Sigmoid colon (tissue), 7 donors: ENCODE measurements at regions of chr10 and their contacts with region 1.

Region 1: GRCh38 chr10:59906417-59907202 is at the start of gene CCDC6:
- DNase-seq: peak; percentile 97
- H3K4me3 ChIP-seq: peak within 1 kb of the TSS; percentile 67 to 96 (median 88)
- H3K27ac ChIP-seq: peak within 1 kb of the TSS; percentile 93
- H3K4me1 ChIP-seq: peaks cover 0 to 59% (median 42%) of the 10 kb centered on the region in 4 donors
- H3K27me3 ChIP-seq: no peaks in the 10 kb centered on the region
- CTCF ChIP-seq: peak; percentile 66 to 92 (median 72)
- EP300 ChIP-seq: no peak
- POLR2A ChIP-seq: peak; percentile 77 to 82
- total RNA-seq, gene CCDC6: 59.2 to 97.5 (median 62.2) TPM

Region 2: DNA sequence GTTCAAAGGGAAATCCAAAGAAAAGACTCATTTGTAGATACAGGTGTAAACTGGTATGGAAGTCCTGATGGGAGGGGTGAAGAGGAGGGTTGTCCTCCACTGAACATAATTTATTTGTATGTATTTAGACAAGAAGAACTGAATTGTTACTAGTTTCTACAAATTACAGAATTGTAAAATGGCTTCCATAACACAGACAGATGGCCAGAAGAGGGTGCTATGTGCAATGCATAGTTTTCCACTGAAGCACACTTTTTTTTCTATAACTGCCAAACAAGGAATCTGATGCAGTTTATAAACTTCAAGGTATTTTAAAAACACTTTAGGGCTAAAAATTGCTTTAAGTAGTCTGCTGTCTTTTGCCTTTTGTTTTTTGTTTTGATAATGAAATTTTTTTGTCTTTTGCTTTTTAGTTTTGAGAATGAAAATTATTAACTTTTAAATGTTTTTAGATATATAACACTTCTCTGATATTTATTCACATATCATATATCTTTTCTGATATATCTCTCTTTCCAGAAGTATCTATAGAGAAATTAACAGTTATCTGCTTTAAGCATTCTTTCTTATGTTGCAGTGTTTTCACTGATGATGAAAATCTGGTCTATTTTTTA is 671.7 kb before region 1 on chr10:
- intact Hi-C with region 1: loop called (anchors 5 kb)
- DNase-seq: no peak
- H3K4me3 ChIP-seq: no peak overlapping the region
- H3K27ac ChIP-seq: no peak overlapping the region
- H3K4me1 ChIP-seq: no peaks in the 10 kb centered on the region
- H3K27me3 ChIP-seq: no peaks in the 10 kb centered on the region
- CTCF ChIP-seq: peak in 3 of 4 experiments; percentile 17 to 53 (median 23)
- EP300 ChIP-seq: no peak
- POLR2A ChIP-seq: no peak

Region 3: GRCh38 chr10:59808896-59809643 is 97.5 kb before region 1 on chr10:
- intact Hi-C with region 1: loop called (anchors 10 kb)
- DNase-seq: peak; percentile 77
- H3K4me3 ChIP-seq: no peak overlapping the region
- H3K27ac ChIP-seq: no peak overlapping the region
- H3K4me1 ChIP-seq: peaks cover 0 to 24% (median 12%) of the 10 kb centered on the region in 4 donors
- H3K27me3 ChIP-seq: no peaks in the 10 kb centered on the region
- CTCF ChIP-seq: peak in 3 of 4 experiments; percentile 32 to 53 (median 51)
- EP300 ChIP-seq: no peak
- POLR2A ChIP-seq: no peak

Region 4: DNA sequence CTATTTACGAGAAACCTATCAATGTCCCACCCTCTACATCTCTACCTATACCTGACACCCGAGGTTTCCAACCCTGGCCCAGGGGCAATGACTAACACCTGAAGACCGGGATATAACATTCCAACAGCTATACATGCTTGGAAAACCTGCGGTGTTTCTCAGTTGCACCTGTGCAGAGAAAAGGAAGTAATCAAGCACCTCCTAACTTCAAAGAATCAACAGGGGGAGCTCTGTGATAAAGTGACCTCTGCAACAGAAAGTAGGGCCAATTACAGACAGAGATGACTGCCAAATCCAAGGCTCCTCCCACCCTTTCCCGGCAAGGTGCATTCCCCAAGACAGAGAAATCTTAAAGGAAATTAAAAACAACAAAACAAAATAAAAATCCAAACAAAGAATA is 41.5 kb before region 1 on chr10:
- intact Hi-C with region 1: loop called (anchors 1 kb)
- DNase-seq: no peak
- H3K4me3 ChIP-seq: no peak overlapping the region
- H3K27ac ChIP-seq: peak overlapping the region; percentile 47 to 87 (median 66)
- H3K4me1 ChIP-seq: peaks cover 0 to 58% (median 37%) of the 10 kb centered on the region in 4 donors
- H3K27me3 ChIP-seq: no peaks in the 10 kb centered on the region
- CTCF ChIP-seq: peak in 3 of 4 experiments; percentile 22 to 42 (median 30)
- EP300 ChIP-seq: no peak
- POLR2A ChIP-seq: no peak

Region 5: GRCh38 chr10:60032723-60033122 is 126.1 kb after region 1 on chr10:
- intact Hi-C with region 1: no loop called
- DNase-seq: no peak
- H3K4me3 ChIP-seq: no peak overlapping the region
- H3K27ac ChIP-seq: peak overlapping the region in 1 of 4 donors; percentile 16
- H3K4me1 ChIP-seq: peaks cover 0 to 16% (median 9%) of the 10 kb centered on the region in 4 donors
- H3K27me3 ChIP-seq: no peaks in the 10 kb centered on the region
- CTCF ChIP-seq: peak in 1 of 4 experiments; percentile 39
- EP300 ChIP-seq: no peak
- POLR2A ChIP-seq: no peak

Region 6: DNA sequence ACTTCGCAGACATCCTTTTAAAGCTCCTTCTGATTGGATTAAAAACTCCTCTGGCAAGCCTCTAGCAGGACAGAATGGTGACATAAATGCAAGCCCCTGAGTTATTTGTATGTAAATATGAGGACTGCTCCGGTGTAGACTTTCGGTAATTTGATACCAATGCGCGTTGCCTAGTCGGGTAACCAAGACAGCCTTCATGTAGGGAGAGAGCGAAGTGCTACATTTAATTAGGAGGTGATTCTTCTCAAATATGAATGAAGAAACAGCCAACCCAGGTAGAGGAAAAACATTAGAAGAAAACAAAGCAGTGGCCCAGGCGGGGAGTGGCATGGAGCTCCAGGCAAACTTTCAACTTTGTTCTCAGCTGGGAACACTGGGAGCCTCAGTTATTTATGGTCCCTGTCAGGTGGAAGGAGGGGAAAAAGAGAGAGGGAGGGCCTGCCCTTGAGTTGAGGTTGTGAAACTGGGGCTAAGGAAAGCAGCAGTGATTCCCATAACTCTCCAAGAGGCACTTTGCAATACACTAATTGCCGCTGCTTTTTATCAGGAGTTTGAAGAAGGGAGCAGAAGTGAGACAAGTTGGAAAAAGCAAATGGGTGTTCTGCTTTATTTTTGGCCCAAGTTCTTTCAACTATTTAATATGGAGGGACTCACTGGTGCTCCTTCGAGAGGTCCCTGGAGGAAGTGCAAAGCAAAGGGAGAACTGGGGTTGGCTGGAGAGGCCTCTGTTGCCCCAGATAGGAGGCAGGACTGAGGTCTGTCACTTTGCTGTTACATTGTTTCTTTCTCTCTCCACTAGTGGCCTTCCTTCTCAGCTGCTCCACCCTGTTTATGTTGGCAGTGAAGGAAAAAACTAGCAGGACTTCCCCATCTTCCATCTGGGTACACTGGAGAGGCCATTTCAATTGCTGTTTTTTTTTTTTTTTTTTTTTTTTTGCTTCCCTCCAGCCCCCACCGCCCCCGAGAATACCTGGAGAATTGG is 234.3 kb after region 1 on chr10:
- intact Hi-C with region 1: loop called (anchors 10 kb)
- DNase-seq: peak; percentile 80
- H3K4me3 ChIP-seq: peak overlapping the region; percentile 9 to 34 (median 30)
- H3K27ac ChIP-seq: peak overlapping the region; percentile 7 to 81 (median 72)
- H3K4me1 ChIP-seq: peaks cover 0 to 55% (median 36%) of the 10 kb centered on the region in 4 donors
- H3K27me3 ChIP-seq: no peaks in the 10 kb centered on the region
- CTCF ChIP-seq: no peak
- EP300 ChIP-seq: peak in 2 of 4 donors; percentile 56 to 67
- POLR2A ChIP-seq: no peak